Activated naive CD8-positive, alpha-beta T cell treated with anti-CD3 and anti-CD28 coated beads, Interleukin-2, amount 10 ng/mL, durations not matched to agents 7 days and 5 days (primary cell): ENCODE measurements at regions of chr15 and their contacts with region 1.

Region 1: DNA sequence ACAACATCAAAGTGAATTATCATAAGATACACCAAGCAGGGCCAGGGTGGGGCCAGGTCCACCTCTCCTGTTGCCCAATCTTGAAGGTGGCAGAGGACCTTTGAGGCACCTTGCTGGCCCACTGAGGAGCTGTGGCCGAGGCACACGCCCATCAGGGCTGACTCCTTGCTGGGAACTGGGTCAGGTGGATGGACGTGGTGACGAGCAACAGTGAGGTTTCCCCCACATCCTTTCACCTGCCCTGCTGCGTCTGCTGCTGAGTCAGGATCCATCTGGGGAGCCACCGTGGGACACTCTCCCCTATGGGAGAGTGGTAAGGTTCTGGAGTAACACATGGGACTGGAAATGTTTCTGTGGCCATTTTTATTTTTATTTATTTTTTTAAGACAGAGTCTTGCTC is 17.3 kb upstream of the FURIN start:
- DNase-seq: no peak
- ATAC-seq: peak; percentile 31
- H3K4me3 Mint-ChIP-seq: peak overlapping the region; percentile 77
- H3K27ac Mint-ChIP-seq: peak overlapping the region; percentile 88
- H3K4me1 Mint-ChIP-seq: peaks cover 44% of the 10 kb centered on the region
- H3K27me3 Mint-ChIP-seq: no peaks in the 10 kb centered on the region

Region 2: DNA sequence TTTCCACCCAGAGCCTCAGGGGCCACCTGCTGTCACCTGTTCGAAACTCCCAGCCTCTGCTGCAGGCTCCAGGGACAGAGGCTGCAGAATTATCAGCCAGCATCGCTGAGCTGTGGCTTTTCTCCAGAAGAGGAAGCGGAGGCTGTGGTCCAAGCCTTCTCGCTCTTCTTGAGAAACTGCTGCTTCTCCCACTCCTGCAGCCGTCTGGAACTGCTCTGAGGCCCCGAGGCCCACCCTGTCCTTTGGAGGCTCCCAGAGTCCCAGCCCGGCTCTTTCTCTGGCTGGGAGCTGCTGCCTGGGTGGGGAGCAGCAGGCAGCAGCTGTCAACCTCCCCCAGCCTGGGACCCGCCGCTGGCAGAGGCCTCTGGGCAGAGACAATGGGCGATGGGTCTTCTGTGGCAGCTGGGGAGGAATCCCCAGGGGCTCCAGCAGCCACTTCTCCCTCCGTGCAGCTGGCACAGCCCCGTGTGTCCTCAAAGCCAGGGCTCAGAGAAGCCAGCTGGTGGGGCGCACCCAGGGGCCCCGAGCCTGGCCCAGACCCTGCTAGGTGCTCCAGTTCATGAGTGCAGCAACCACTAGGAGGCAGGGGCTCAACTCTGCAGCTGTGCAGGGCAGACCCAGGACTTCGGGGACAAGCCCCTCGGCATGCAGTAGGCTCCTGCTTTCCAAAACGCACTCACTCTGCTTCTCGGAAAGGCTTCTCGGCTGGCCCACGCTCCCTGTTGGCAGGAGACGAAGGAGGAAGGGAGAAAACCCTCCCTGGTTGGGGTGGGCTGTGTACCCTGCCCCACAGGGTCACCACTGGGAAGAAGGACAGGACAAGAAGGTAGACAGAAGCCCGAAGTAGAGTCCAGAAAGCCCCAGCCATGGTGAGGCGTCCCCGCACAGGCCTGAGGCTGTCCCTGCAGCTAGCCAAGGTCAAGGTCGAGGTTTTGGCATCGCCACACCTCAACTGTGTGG is 32.6 kb before region 1 on chr15:
- POLR2A ChIA-PET with region 1: interaction called, 14 read pairs
- DNase-seq: peak; percentile 53
- ATAC-seq: peak; percentile 35
- H3K4me3 Mint-ChIP-seq: peak overlapping the region; percentile 52
- H3K27ac Mint-ChIP-seq: peak overlapping the region; percentile 83
- H3K4me1 Mint-ChIP-seq: peaks cover 53% of the 10 kb centered on the region
- H3K27me3 Mint-ChIP-seq: no peaks in the 10 kb centered on the region

Region 3: DNA sequence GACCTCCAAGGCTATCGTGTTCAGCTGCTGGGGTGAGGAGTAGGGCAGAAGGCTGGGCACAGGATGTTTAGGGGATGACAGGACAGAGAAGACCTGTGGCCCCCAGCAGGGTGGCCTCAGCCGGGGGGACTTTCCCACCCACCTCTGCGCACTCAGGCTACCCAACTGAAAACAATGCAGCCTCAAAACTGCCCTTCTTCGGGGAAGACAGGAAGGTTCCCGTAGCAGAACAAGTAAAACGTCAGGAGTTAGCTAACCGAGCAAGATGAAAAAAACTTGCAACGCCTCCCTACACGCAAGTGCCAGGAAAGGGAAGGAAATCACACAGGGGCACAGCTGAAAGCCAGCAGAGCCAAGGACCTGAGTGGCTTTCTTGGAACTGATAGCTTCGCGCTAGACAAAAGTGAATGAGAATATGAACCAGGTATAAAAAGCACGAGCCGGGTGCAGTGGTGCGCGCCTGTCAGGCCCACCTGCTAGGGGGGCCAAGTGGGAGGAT is 21.1 kb before region 1 on chr15:
- POLR2A ChIA-PET with region 1: interaction called, 23 read pairs
- DNase-seq: peak; percentile 64
- ATAC-seq: peak; percentile 83
- H3K4me3 Mint-ChIP-seq: peak overlapping the region; percentile 73
- H3K27ac Mint-ChIP-seq: peak overlapping the region; percentile 92
- H3K4me1 Mint-ChIP-seq: peaks cover 35% of the 10 kb centered on the region
- H3K27me3 Mint-ChIP-seq: no peaks in the 10 kb centered on the region

Region 4: DNA sequence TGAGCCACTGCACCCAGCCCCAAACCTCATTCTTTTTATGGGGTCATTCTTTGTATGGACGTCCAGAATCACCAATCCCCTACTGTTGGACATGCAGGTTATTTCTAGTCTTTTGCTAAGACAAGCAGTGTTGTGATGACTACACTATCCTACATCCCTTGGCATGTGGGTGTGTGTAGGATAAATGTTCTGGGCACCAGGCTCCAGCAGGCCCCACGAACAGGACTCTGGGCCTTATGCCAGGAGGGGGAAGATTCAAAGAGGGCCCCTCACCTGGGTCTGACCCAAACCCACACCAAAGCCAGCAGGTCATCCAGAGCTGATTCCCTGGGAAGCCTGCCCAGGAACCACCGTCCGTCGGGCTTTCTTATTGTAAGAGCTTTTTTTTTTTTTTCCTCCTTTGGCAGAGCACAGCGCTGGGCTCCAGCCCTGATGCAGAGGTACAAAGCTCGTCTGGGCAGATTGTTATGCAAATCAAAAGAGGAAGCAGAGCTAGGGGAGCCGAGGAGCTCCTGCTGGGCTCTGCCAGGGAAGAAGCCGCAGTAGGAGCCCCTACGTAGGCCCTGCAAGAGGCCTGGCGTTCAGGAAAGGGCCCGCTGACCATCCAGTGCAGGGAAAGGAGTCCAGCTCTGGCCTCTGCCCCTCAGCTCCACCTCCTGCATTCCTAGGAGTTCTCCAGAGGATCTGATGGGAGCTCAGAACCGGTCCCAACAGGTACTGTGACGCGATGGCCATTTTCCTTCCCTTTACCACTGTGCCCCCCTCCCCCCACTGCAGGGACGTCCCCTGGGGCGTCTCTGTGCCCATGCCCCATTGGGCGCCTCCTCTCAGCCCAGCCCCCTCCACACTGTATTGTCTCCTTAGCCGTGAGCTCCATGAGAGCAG is 11.7 kb before region 1 on chr15:
- POLR2A ChIA-PET with region 1: interaction called, 42 read pairs
- DNase-seq: no peak
- ATAC-seq: no peak
- H3K4me3 Mint-ChIP-seq: peak overlapping the region; percentile 75
- H3K27ac Mint-ChIP-seq: peak overlapping the region; percentile 90
- H3K4me1 Mint-ChIP-seq: peaks cover 41% of the 10 kb centered on the region
- H3K27me3 Mint-ChIP-seq: no peaks in the 10 kb centered on the region

Region 5: GRCh38 chr15:90869601-90870353 is 18.7 kb after region 1 on chr15:
- POLR2A ChIA-PET with region 1: interaction called, 17 read pairs
- DNase-seq: no peak
- ATAC-seq: peak; percentile 37
- H3K4me3 Mint-ChIP-seq: peak overlapping the region; percentile 91
- H3K27ac Mint-ChIP-seq: peak overlapping the region; percentile 92
- H3K4me1 Mint-ChIP-seq: peaks cover 44% of the 10 kb centered on the region
- H3K27me3 Mint-ChIP-seq: no peaks in the 10 kb centered on the region